Ascending aorta (tissue), 2 donors: ENCODE measurements at regions of chr7 and their contacts with region 1.

Region 1: DNA sequence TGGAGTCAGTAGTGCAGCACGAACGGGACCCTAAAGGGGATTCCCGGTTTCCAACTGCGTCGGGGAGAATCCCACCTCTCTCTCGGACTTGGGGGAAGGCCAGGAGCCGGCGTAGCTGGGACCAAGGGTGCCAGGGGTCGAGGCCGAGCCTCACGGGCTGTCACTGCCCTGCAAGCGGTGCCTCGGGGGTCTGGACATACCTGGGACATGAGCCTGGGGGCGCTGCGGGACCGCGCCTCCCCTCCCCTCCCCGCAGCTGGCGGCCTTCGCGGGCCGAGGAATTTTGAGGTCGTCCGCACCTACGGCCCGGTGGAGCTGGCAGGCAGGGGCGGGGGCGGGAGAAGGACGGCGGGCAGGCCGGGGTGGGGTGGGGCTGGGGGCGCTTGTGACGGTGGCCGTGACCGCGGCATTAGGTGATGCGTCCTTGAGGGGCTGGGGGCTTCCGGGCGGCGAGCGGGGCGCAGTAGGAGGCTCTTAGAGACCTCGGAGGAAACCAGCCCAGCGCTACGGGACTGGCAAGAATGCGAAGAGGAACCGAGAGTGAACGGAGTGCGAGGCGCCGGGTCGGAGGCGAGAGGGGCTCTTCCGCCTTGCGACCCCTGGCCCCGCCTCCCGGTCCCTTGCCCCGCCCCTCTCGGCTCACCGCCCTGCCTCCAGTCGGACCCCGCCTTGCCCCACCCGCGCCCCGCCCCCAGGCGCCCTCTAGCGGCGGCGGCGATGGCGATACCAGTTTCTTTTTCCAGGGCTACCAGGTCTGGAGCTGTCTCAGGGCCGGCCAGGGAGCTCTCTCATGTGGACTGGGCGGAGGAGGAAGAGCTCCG is 48.3 kb downstream of the NPVF start:
- DNase-seq: peak; percentile 58 to 97
- H3K4me3 ChIP-seq: peak overlapping the region; percentile 69 to 74
- H3K27ac ChIP-seq: peak overlapping the region; percentile 78 to 85
- H3K4me1 ChIP-seq: peaks cover 0 to 4% of the 10 kb centered on the region in 2 donors
- H3K27me3 ChIP-seq: no peaks in the 10 kb centered on the region
- CTCF ChIP-seq: peak; percentile 54 to 95 (median 87)

Region 2: GRCh38 chr7:24757353-24758275 is 422.4 kb before region 1 on chr7 and contains the start of gene GSDME:
- intact Hi-C with region 1: loop called (anchors 5 kb)
- DNase-seq: peak in 1 of 2 donors; percentile 80
- H3K4me3 ChIP-seq: peak within 1 kb of the TSS; percentile 78 to 85
- H3K27ac ChIP-seq: peak within 1 kb of the TSS; percentile 94 to 95
- H3K4me1 ChIP-seq: peaks cover 0 to 4% of the 10 kb centered on the region in 2 donors
- H3K27me3 ChIP-seq: no peaks in the 10 kb centered on the region
- CTCF ChIP-seq: peak in 1 of 3 experiments; percentile 8
- total RNA-seq, gene GSDME: 14.9 TPM

Region 3: GRCh38 chr7:25125137-25125946 is 54.6 kb before region 1 on chr7 and contains the start of gene CYCS:
- intact Hi-C with region 1: loop called (anchors 1 kb)
- DNase-seq: peak; percentile 98 to 100
- H3K4me3 ChIP-seq: peak within 1 kb of the TSS; percentile 82 to 100
- H3K27ac ChIP-seq: peak within 1 kb of the TSS; percentile 90 to 99
- H3K4me1 ChIP-seq: peaks cover 0 to 4% of the 10 kb centered on the region in 2 donors
- H3K27me3 ChIP-seq: no peaks in the 10 kb centered on the region
- CTCF ChIP-seq: no peak
- total RNA-seq, gene CYCS: 11.5 TPM

Region 4: DNA sequence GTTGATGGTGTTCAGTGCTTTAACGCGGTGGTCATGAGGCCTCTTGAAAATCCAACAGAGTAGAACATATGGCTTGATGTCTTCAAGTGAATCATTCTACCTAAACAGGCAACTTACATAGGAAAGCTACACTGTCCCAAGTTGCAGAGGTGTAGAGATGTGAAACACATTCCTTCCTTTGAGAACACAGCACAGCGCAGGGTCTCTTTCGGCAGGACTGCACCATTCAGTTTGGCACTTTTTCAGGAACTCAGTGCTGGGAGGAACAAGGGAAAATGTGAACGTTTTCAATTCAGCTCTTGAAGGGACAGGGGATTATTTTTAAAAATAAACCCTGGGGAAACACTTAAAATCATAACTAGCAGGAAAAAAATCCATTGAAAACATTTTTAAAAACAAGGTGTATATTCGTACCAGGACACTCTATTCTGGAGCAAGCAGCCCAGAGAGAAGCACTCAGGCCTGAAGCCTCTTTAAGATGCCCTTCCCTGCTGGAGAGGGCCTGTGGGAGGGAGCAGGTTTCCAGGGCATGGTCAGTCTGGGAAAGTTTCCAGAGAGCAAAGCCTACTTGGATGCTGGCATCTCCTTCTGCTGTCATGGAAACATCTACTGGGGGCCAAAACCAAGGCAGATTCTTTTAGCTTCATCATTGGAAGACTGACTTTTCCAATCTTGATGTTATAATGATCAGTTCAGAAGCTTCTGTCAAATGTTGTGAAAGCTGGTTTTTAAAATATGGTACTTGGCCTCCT is 108.8 kb after region 1 on chr7:
- intact Hi-C with region 1: no loop called
- DNase-seq: no peak
- H3K4me3 ChIP-seq: no peak overlapping the region
- H3K27ac ChIP-seq: no peak overlapping the region
- H3K4me1 ChIP-seq: no peaks in the 10 kb centered on the region
- H3K27me3 ChIP-seq: no peaks in the 10 kb centered on the region
- CTCF ChIP-seq: no peak

Region 5: GRCh38 chr7:25636871-25637283 is 456.9 kb after region 1 on chr7:
- intact Hi-C with region 1: no loop called
- DNase-seq: no peak
- H3K4me3 ChIP-seq: no peak overlapping the region
- H3K27ac ChIP-seq: peak overlapping the region in 1 of 2 donors; percentile 23
- H3K4me1 ChIP-seq: peaks cover 0 to 22% of the 10 kb centered on the region in 2 donors
- H3K27me3 ChIP-seq: no peaks in the 10 kb centered on the region
- CTCF ChIP-seq: no peak